H1 (cell line): ENCODE measurements at regions of chr12 and their contacts with region 1.

Region 1: GRCh38 chr12:67161322-67161918 is 107.7 kb upstream of the CAND1 start:
- DNase-seq: peak in 1 of 2 experiments; percentile 61
- H3K4me3 ChIP-seq: no peak overlapping the region
- H3K27ac ChIP-seq: no peak overlapping the region
- H3K4me1 ChIP-seq: no peaks in the 10 kb centered on the region
- H3K27me3 ChIP-seq: no peaks in the 10 kb centered on the region
- CTCF ChIP-seq: peak in 2 of 3 experiments; percentile 55 to 70; a peak in 3 of 4 replicates
- EP300 ChIP-seq: no peak
- POLR2A ChIP-seq: no peak
- RAD21 ChIP-seq: peak; percentile 56 to 68

Region 2: DNA sequence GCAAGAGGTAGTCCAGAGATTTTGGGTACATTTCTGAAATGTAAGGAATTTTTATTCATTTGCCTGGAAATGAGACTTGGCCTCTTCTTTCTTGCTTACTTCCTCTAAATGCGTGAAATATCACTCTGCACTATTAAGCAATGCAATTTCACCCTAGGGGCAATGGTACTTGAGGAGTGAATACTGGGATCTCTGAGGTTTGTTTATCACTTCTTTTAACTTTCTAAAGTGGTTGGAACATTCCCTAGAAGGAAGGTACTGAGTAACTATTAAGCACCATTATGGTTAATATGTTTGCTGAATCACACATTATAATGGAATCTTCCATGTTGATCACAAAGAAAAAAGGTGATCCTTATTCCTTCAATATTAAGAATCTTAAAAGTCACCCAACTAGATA is 13.2 kb before region 1 on chr12:
- CTCF ChIA-PET with region 1: interaction called, 15 read pairs
- POLR2A ChIA-PET with region 1: no interaction called
- DNase-seq: no peak
- H3K4me3 ChIP-seq: no peak overlapping the region
- H3K27ac ChIP-seq: no peak overlapping the region
- H3K4me1 ChIP-seq: no peaks in the 10 kb centered on the region
- H3K27me3 ChIP-seq: no peaks in the 10 kb centered on the region
- CTCF ChIP-seq: no peak
- EP300 ChIP-seq: no peak
- POLR2A ChIP-seq: no peak
- RAD21 ChIP-seq: no peak

Region 3: GRCh38 chr12:67173258-67173657 is 11.8 kb after region 1 on chr12:
- CTCF ChIA-PET with region 1: interaction called, 21 read pairs
- POLR2A ChIA-PET with region 1: no interaction called
- DNase-seq: no peak
- H3K4me3 ChIP-seq: no peak overlapping the region
- H3K27ac ChIP-seq: no peak overlapping the region
- H3K4me1 ChIP-seq: no peaks in the 10 kb centered on the region
- H3K27me3 ChIP-seq: no peaks in the 10 kb centered on the region
- CTCF ChIP-seq: no peak
- EP300 ChIP-seq: no peak
- POLR2A ChIP-seq: no peak
- RAD21 ChIP-seq: no peak

Region 4: GRCh38 chr12:67222302-67222701 is 60.9 kb after region 1 on chr12:
- CTCF ChIA-PET with region 1: interaction called, 89 read pairs
- POLR2A ChIA-PET with region 1: no interaction called
- DNase-seq: no peak
- H3K4me3 ChIP-seq: no peak overlapping the region
- H3K27ac ChIP-seq: no peak overlapping the region
- H3K4me1 ChIP-seq: peaks cover 0 to 4% (median 2%) of the 10 kb centered on the region in 4 experiments; a peak in 3 of 7 replicates
- H3K27me3 ChIP-seq: no peaks in the 10 kb centered on the region
- CTCF ChIP-seq: peak in 2 of 3 experiments; percentile 40 to 66; a peak in 2 of 4 replicates
- EP300 ChIP-seq: no peak
- POLR2A ChIP-seq: no peak
- RAD21 ChIP-seq: peak; percentile 67 to 69